Activated CD8-positive, alpha-beta T cell treated with anti-CD3 and anti-CD28 coated beads for 36 hours (primary cell): ENCODE measurements at regions of chr1 and their contacts with region 1.

Region 1: GRCh38 chr1:153352523-153352922 is 3.9 kb upstream of the PGLYRP4 start:
- DNase-seq: peak; percentile 77
- ATAC-seq: peak; percentile 74
- H3K4me3 Mint-ChIP-seq: no peak overlapping the region
- H3K27ac Mint-ChIP-seq: no peak overlapping the region
- H3K4me1 Mint-ChIP-seq: peaks cover 2% of the 10 kb centered on the region
- H3K27me3 Mint-ChIP-seq: peaks cover 9% of the 10 kb centered on the region
- CTCF ChIP-seq: peak; percentile 84

Region 2: GRCh38 chr1:153404768-153405167 is 52.2 kb after region 1 on chr1:
- CTCF ChIA-PET with region 1: interaction called, 20 read pairs
- POLR2A ChIA-PET with region 1: no interaction called
- intact Hi-C with region 1: loop called (anchors 5 kb)
- DNase-seq: peak; percentile 74
- ATAC-seq: peak; percentile 70
- H3K4me3 Mint-ChIP-seq: no peak overlapping the region
- H3K27ac Mint-ChIP-seq: no peak overlapping the region
- H3K4me1 Mint-ChIP-seq: peaks cover 8% of the 10 kb centered on the region
- H3K27me3 Mint-ChIP-seq: peaks cover 15% of the 10 kb centered on the region
- CTCF ChIP-seq: peak; percentile 69

Region 3: DNA sequence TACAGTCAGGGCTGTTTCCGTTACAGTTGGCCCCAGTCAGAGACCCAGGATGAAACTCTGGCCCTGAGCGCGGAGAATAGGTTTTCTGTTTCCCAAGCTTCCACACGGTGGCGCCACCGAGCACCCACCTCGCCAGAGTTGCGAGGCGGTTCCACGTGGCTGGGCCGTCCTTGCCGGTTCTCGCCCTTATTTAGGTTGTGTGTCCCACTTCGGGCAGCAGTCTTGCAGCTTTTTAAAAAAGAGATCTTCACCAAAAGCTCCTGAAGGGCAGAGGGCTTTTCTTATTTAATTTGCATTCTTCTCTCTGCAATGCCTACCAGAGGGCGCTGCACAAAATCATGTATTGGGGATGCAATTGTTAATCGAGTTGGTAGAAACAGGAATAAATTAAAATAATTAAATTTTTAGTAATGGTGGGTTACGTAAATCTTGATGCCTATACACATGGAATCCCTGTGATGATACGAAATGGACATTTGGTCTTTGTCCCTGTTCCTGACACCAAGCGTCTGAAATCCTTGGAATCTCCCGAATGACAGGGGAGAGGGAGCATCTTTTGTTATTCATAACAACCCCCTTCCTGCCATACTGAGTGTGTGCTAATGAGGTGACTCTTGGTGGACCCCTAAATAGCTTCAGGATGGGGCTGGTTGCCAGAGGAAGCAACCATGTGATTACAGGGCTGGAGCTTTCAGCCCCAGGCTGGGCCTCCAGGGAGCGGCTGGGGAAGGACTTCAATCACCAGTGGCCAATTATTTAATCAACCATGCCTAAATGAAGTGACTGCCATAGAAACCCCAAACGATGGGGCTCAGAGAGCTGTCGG is 113.5 kb after region 1 on chr1:
- CTCF ChIA-PET with region 1: interaction called, 16 read pairs
- POLR2A ChIA-PET with region 1: no interaction called
- intact Hi-C with region 1: no loop called
- DNase-seq: peak; percentile 73
- ATAC-seq: peak; percentile 78
- H3K4me3 Mint-ChIP-seq: no peak overlapping the region
- H3K27ac Mint-ChIP-seq: no peak overlapping the region
- H3K4me1 Mint-ChIP-seq: no peaks in the 10 kb centered on the region
- H3K27me3 Mint-ChIP-seq: peaks cover 16% of the 10 kb centered on the region
- CTCF ChIP-seq: peak; percentile 87